SK-N-SH (cell line): ENCODE measurements at regions of chr7 and their contacts with region 1.

Region 1: DNA sequence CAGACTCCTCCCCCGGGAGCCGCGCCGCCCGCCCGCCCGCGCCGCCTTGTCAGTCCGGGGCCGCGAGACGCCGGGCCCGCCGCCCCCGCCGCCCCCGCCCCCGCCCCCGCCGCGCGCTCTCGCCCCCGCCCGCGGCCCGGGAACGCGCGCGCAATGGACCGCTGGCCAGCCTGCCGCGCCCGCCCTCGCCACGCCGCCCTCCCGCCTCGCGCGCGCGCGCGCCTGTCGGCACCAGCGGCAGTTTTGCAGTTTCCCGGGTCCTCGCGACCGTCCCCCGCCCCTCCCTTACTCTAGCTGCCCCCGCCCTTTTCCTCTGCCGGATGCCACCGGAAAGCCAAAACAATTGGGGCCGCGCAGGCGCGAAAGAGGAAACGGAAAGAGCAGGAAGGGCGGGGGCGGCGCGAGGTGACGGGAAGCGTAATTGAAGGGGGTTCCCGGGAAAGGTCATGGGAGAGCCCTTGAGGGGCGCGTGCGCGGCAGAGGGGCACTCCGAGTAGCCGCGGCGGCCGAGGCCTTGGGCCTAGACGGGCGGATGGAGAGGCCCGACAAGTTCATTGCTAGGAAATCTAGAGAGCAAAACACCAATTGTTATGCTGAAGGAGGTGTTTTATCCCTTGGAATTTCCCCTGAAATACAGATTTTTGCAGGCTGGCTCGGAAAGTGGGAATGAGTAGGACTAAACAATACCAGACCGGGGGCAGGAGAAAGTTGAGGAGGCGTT is 400 bp upstream of the KBTBD2 start:
- DNase-seq: peak; percentile 96
- H3K4me3 ChIP-seq: peak overlapping the region; percentile 78 to 86
- H3K27ac ChIP-seq: peak overlapping the region; percentile 98 to 99
- H3K4me1 ChIP-seq: peaks cover 26 to 30% of the 10 kb centered on the region in 2 experiments; a peak in 3 of 4 replicates
- H3K27me3 ChIP-seq: no peaks in the 10 kb centered on the region
- CTCF ChIP-seq: no peak
- EP300 ChIP-seq: peak; percentile 45 to 47; a peak in 2 of 4 replicates
- RAD21 ChIP-seq: no peak

Region 2: DNA sequence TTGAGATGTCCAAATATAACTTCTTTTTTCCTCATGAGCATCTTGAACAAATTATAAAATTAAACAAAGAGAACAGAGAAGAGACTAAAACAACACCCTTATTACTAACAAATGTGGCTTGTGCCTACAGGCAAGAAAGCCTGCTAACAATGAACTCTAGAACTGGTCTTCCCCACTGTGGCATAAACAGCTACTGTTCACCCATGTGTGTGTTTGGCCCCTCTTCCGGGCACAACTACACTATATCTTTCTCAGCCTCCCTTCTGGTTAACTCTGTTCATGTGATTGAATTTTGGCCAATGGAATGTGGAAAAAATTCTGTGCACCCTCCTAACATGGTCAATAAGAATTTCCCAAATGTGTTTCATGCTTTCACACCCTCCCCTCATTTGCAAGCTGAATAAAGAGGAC is 117.4 kb before region 1 on chr7:
- CTCF ChIA-PET with region 1: no interaction called
- POLR2A ChIA-PET with region 1: no interaction called
- DNase-seq: no peak
- H3K4me3 ChIP-seq: no peak overlapping the region
- H3K27ac ChIP-seq: peak overlapping the region in 1 of 2 experiments; percentile 43; a peak in 2 of 4 replicates
- H3K4me1 ChIP-seq: peaks cover 0 to 9% of the 10 kb centered on the region in 2 experiments; a peak in 2 of 4 replicates
- H3K27me3 ChIP-seq: no peaks in the 10 kb centered on the region
- CTCF ChIP-seq: no peak
- EP300 ChIP-seq: no peak
- RAD21 ChIP-seq: no peak

Region 3: DNA sequence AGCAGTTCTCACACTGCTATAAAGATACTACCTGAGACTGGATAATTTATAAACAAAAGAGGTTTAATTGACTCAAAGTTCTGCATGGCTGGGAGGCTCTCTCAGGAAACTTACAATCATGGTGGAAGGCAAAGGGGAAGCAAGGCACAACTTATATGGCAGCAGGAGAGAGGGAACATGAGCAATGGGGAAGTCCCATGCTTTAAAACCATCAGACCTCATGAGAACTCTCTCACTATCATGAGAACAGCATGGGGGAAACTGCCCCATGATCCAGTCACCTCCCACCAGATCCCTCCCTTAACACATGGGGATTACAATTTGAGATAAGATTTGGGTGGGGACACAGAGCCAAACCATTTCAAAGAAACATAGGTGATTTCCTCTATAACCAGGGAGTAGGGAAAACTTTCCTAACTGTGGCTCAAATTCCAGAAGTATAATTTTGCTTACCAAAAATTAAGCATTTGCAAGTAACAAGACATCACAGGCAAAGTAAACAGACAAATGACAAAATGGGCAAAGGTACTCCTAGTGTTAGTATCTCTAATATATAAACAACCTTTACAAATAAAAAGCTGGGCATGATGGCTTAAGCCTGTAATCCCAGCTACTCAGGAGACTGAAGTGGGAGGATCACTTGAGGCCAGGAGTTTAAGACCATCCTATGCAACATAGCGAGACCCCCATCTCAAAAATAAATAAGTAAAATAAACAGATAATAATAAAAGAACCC is 88.4 kb before region 1 on chr7:
- CTCF ChIA-PET with region 1: interaction called, 13 read pairs
- POLR2A ChIA-PET with region 1: interaction called, 6 read pairs
- DNase-seq: no peak
- H3K4me3 ChIP-seq: no peak overlapping the region
- H3K27ac ChIP-seq: no peak overlapping the region
- H3K4me1 ChIP-seq: no peaks in the 10 kb centered on the region; a peak in 1 of 4 replicates
- H3K27me3 ChIP-seq: no peaks in the 10 kb centered on the region
- CTCF ChIP-seq: no peak
- EP300 ChIP-seq: no peak
- RAD21 ChIP-seq: no peak

Region 4: GRCh38 chr7:32905175-32905662 is 13.3 kb after region 1 on chr7:
- CTCF ChIA-PET with region 1: interaction called, 8 read pairs
- POLR2A ChIA-PET with region 1: interaction called, 15 read pairs
- DNase-seq: peak; percentile 83
- H3K4me3 ChIP-seq: peak overlapping the region; percentile 35 to 36
- H3K27ac ChIP-seq: peak overlapping the region; percentile 46 to 51; a peak in 3 of 4 replicates
- H3K4me1 ChIP-seq: peaks cover 0 to 2% of the 10 kb centered on the region in 2 experiments; a peak in 1 of 4 replicates
- H3K27me3 ChIP-seq: no peaks in the 10 kb centered on the region
- CTCF ChIP-seq: no peak
- EP300 ChIP-seq: no peak
- RAD21 ChIP-seq: peak; percentile 39

Region 5: DNA sequence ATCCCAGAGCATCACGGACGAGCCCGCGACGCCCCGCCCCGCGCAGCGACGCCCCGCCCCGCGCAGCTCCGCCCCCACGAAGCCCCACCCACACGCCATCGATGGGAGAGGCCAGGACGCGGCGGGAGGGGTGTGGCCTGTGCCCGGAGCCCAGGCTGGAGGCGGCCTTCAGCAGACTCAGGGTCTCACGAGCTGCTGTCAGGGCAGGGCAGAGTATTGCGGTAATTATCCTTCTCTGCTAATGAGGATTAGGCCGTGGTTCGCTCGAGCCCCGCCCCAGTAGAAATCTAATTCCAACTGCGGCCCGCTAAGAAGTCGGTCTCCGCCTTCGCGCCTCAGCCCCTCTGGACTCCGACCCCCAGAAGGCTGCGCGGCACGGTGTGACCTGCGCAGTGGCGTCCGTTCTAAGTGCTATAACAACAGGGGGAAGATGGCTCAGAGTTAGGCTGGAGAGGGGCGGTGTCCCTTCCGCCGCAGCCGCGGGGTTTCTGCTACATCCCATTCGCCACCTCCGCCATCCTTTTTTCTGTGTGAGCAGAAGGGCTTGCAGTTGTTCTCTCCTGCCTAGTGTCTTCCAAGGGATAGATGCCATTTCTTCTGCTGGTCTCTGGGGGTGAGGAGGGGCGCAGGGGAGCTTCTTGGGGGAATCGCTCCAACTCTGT is 171.0 kb after region 1 on chr7:
- CTCF ChIA-PET with region 1: no interaction called
- POLR2A ChIA-PET with region 1: interaction called, 10 read pairs
- DNase-seq: peak; percentile 99
- H3K4me3 ChIP-seq: peak overlapping the region; percentile 81 to 85
- H3K27ac ChIP-seq: peak overlapping the region; percentile 91 to 96
- H3K4me1 ChIP-seq: peaks cover 3 to 10% of the 10 kb centered on the region in 2 experiments; a peak in 2 of 4 replicates
- H3K27me3 ChIP-seq: no peaks in the 10 kb centered on the region
- CTCF ChIP-seq: no peak
- EP300 ChIP-seq: no peak
- RAD21 ChIP-seq: no peak

Region 6: DNA sequence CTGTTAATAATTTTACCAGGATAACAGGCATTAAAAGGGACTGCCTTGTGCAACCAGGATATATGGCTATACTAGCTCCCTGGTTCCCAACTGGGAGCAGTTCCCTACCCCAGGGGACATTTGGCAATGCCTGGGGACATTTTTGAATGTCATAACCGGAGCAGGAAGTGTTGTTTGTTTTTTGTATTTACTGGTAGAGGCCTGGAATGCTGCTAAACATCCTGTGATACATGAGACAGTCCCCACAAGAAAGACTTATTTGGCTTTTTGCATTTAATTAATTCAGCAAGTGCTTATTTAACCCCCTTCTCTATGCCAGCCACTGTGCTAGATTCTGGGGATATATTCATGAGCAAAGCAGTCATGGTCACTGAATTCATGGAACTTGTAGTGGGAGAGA is 418.6 kb after region 1 on chr7:
- CTCF ChIA-PET with region 1: no interaction called
- POLR2A ChIA-PET with region 1: no interaction called
- DNase-seq: no peak
- H3K4me3 ChIP-seq: no peak overlapping the region
- H3K27ac ChIP-seq: no peak overlapping the region
- H3K4me1 ChIP-seq: no peaks in the 10 kb centered on the region
- H3K27me3 ChIP-seq: no peaks in the 10 kb centered on the region
- CTCF ChIP-seq: no peak
- EP300 ChIP-seq: no peak
- RAD21 ChIP-seq: no peak